Breast epithelium (tissue), 4 donors: ENCODE measurements at regions of chr20 and their contacts with region 1.

Region 1: GRCh38 chr20:38658879-38659596 is 57.4 kb downstream of the ARHGAP40 start:
- DNase-seq: no peak
- H3K4me3 ChIP-seq: no peak overlapping the region
- H3K27ac ChIP-seq: no peak overlapping the region
- H3K4me1 ChIP-seq: no peaks in the 10 kb centered on the region
- H3K27me3 ChIP-seq: peaks cover 0 to 36% of the 10 kb centered on the region in 2 donors
- CTCF ChIP-seq: peak; percentile 9 to 61 (median 45)
- POLR2A ChIP-seq: no peak

Region 2: DNA sequence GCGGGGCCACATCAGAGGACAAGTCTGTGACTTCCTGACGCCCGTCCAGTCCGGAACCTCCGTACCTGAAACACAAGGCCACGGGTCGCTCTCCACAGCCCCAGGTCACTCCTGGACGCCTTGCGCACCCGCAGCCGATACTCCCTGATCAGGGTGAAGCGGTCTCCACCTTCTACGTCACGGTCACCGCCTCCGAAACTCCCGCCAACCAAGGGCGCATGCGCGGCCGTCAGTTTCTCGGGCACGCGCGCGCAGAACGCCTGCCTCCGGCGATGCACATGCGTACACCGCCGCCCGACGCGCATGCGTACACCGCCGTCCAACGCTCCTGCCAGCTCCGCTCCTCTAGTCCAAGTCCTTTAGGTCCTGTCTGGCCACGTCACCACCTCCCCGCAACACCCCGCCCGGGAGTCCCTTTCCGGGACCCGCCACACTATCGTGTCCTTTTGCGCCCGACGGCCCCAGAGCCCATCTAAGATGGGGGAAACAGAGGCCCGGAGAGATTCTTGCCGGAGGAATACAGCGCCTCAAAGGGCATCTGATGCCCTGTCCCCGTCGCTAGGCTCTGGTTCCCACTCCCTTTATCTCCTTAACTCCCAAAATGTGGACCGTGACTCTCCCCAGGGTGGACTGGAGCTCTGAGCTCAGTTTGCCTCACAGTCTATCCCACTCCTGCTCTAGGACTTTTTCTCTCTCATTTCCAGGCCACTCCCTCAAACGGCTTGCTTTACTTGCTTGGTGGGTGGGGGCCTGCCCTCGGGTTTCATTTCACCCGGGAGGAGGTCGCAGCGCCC is 1885.2 kb before region 1 on chr20 and contains the start of gene DSN1:
- intact Hi-C with region 1: no loop called
- DNase-seq: peak; percentile 96 to 98
- H3K4me3 ChIP-seq: peak within 1 kb of the TSS; percentile 62 to 89 (median 78)
- H3K27ac ChIP-seq: peak within 1 kb of the TSS; percentile 97 to 99
- H3K4me1 ChIP-seq: no peaks in the 10 kb centered on the region
- H3K27me3 ChIP-seq: no peaks in the 10 kb centered on the region
- CTCF ChIP-seq: peak in 1 of 3 donors; percentile 16
- POLR2A ChIP-seq: peak; percentile 60
- total RNA-seq, gene DSN1: 6.9 to 13.1 (median 11.9) TPM

Region 3: GRCh38 chr20:38674765-38675133 is 15.7 kb after region 1 on chr20:
- intact Hi-C with region 1: loop called (anchors 1 kb)
- DNase-seq: no peak
- H3K4me3 ChIP-seq: peak overlapping the region in 2 of 3 donors; percentile 46 to 70
- H3K27ac ChIP-seq: no peak overlapping the region
- H3K4me1 ChIP-seq: no peaks in the 10 kb centered on the region
- H3K27me3 ChIP-seq: peaks cover 4 to 37% of the 10 kb centered on the region in 2 donors
- CTCF ChIP-seq: no peak
- POLR2A ChIP-seq: no peak

Region 4: DNA sequence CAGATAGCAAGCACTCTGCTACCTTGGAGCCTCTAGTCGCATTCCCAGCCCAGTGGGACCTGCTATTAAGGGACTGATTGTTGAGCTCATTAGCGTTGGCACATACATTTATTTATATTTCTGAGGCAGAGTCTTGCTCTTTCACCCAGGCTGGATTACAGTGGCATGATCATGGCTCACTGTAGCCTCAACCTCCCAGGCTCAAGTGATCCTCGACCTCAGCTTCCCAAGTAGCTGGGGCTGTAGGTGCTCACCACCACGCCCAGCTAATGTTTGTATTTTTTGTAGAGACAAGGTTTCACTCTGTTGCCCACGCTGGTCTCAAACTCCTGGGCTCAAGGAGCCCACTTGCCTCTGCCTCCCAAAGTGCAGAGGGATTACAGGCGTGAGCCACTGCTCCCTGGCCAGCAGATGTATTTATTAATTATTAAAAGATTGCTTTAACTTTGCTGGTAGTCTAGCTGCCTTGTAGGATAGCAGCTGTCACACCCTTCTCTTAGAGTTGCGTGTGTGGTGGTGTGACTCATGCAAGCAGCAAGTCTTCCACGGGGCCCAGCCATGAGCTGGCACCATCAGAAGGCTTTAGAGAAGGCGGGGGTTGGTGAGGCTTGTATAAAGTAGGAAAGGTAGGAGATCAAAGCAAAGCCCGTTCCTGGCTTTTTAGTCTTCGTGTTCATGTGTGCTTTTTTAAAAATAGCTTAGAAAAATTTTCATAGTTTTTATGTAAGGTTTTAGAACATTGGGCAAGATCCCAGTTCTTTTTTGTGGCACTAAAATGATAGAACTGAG is 105.7 kb after region 1 on chr20:
- intact Hi-C with region 1: no loop called
- DNase-seq: no peak
- H3K4me3 ChIP-seq: no peak overlapping the region
- H3K27ac ChIP-seq: no peak overlapping the region
- H3K4me1 ChIP-seq: no peaks in the 10 kb centered on the region
- H3K27me3 ChIP-seq: no peaks in the 10 kb centered on the region
- CTCF ChIP-seq: no peak
- POLR2A ChIP-seq: no peak

Region 5: DNA sequence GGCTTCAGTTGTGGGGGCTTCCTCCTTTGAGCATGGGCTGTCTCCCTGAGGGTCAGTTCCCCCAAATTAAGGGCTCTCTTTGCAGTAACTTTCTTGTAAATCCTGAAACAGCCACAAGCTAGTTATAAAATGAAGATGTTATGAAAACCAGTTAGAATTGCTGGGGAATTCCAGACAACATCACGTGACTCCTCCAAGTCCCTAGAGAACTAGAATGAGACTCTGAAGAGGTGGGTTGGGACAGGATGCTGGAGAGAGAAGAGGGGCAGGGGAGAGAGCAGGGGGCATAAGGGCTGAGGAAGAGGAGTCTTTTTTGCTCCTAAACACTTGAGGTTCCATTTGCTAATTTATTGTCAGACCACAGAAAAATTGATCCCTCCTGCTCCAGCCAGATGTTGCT is 683.4 kb after region 1 on chr20:
- intact Hi-C with region 1: no loop called
- DNase-seq: no peak
- H3K4me3 ChIP-seq: no peak overlapping the region
- H3K27ac ChIP-seq: no peak overlapping the region
- H3K4me1 ChIP-seq: no peaks in the 10 kb centered on the region
- H3K27me3 ChIP-seq: no peaks in the 10 kb centered on the region
- CTCF ChIP-seq: no peak
- POLR2A ChIP-seq: no peak